Activated T-helper 2 cell treated with anti-CD3 and anti-CD28 coated beads, Interferon-gamma antibody, Interleukin-2, Interleukin-4, amounts not matched to agents 10 μg/mL and 5 μg/mL and 100 μg/mL, durations not matched to agents 14 hours and 24 hours and 36 hours (primary cell): ENCODE measurements at regions of chr2 and their contacts with region 1.

Region 1: DNA sequence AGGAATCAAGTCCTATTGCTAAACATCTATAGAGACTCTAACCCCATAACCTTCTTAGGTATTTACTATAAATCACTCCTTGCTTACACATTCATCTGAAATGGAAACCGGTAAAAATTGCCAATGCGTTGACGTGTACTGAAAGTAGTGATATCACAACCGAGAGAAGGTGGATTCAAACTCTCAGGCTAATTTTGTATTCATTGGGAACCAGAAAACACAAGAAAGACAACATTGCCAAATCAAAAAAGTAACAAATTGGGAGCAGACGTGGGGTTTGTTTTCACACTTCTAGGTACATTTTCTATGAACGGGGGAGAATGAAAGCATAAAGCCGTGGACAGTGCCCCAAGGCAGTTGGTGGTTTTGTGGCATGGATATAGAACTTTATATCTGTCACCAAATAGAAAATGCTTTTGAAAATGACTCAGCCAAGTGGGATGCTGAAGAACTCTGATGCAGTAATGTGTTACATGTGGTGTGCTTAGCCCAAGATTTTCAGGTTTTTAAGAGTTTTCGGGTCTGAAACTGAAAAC is 155.1 kb upstream of the RASGRP3 start:
- DNase-seq: peak; percentile 41
- H3K4me3 Mint-ChIP-seq: peak overlapping the region; percentile 51
- H3K27ac Mint-ChIP-seq: peak overlapping the region; percentile 94
- H3K4me1 Mint-ChIP-seq: peaks cover 32% of the 10 kb centered on the region
- H3K27me3 Mint-ChIP-seq: peaks cover under 1% of the 10 kb centered on the region

Region 2: DNA sequence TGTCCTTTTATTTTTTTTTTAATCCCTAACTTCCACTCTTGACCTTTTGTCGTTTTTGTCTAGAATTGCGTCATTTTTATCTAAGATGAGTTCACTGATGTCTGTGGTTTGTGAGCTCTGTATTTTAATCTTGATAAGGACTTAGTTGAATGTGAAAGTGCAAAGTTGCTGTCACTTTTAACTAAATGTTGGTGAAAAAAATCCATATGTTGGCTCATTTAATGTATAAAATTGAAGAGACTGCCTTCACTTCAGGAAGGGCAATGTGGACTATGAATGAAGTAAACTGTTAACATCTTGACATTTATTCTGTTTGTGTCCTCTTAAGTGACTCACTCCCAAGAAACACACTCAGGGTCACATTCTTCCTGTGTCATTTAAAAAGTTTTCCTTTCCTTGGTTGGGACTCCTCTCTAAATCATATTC is 101.4 kb before region 1 on chr2:
- intact Hi-C with region 1: loop called (anchors 1 kb)
- DNase-seq: no peak
- H3K4me3 Mint-ChIP-seq: no peak overlapping the region
- H3K27ac Mint-ChIP-seq: peak overlapping the region; percentile 41
- H3K4me1 Mint-ChIP-seq: peaks cover 20% of the 10 kb centered on the region
- H3K27me3 Mint-ChIP-seq: peaks cover 7% of the 10 kb centered on the region

Region 3: GRCh38 chr2:33336036-33336625 is 14.8 kb after region 1 on chr2:
- intact Hi-C with region 1: loop called (anchors 2 kb)
- DNase-seq: no peak
- H3K4me3 Mint-ChIP-seq: no peak overlapping the region
- H3K27ac Mint-ChIP-seq: peak overlapping the region; percentile 30
- H3K4me1 Mint-ChIP-seq: peaks cover 9% of the 10 kb centered on the region
- H3K27me3 Mint-ChIP-seq: peaks cover 9% of the 10 kb centered on the region

Region 4: GRCh38 chr2:33475224-33476130 is 154.2 kb after region 1 on chr2:
- intact Hi-C with region 1: loop called (anchors 1 kb)
- DNase-seq: peak; percentile 77
- H3K4me3 Mint-ChIP-seq: peak overlapping the region; percentile 83
- H3K27ac Mint-ChIP-seq: peak overlapping the region; percentile 96
- H3K4me1 Mint-ChIP-seq: peaks cover 30% of the 10 kb centered on the region
- H3K27me3 Mint-ChIP-seq: peaks cover 8% of the 10 kb centered on the region

Region 5: DNA sequence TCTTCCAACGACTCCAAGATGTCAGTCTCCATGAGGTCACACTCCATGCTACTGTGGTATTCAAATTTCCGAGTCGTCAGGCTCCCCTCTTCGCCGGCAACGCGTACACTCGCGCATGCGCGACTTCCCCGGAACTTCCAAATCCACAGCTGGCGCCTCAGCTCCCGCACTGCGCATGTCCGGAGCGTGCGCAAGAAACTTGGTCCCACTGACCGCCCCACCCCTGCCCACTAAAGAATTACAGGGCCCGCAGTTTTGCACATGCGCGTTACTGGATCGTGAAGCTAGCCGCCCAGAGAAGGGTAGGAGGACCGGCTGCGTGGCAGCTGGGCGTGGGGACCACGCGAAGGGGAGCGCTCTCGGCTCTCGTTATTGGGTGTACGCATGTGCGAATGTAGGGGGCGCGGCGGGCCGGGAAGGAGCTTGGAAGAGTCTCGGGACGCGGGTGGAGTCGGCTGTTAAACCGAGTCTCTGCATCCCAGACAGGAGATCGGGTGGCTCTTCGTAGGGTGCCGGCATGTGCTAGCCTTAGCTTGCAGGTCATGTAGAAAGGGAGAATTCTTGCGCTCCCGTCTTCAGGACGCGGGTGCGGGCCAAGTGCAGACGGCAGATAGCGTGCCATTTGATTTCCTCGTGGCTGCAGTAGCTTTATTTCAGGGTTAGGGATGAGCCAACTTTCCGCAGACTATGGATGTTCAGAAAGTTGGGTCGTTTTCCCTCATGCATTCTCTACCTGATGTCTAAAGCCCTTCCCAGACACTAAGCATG is 278.1 kb after region 1 on chr2 and contains the start of gene FAM98A:
- intact Hi-C with region 1: loop called (anchors 5 kb)
- DNase-seq: peak; percentile 98
- H3K4me3 Mint-ChIP-seq: peak within 1 kb of the TSS; percentile 88
- H3K27ac Mint-ChIP-seq: peak within 1 kb of the TSS; percentile 97
- H3K4me1 Mint-ChIP-seq: peaks cover 20% of the 10 kb centered on the region
- H3K27me3 Mint-ChIP-seq: peaks cover 3% of the 10 kb centered on the region
- total RNA-seq, gene FAM98A: 62.7 and 63.8 TPM in 2 replicates